ENCODE measurements at regions of chr11 and their contacts with region 1.

Region 1: DNA sequence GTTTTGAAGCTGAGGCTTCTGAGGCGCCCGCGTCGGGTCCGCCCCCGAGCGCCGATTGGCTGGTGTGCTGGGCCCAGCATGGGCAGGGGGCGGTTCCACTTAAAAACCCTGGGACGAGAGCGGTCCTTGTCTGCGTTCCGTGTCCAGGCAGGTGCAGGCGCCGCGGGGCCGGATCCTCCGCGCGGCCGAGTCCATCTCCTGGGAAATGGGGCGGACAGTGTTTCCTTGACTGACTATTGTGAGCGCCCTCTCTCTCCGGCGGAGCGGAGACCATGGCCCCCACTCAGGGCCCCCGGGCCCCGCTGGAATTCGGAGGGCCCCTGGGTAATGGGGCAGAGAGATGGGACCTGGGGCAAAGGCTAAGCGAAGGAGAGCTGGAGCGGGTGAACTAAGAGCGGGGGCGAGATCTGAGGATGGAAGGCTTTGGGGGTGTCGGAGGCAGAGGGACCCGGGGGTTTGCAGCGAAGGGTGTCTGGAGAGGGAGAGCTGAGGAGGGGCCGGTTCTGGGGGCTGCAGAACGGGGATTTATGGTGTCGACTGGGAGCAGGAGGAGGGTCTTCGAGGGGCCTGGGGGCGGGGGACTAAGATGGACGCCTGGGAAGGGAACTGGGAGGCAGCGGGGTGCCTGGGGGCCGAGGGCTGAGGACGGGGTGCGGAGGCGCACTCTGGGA is at the start of gene TM7SF2:
- DNase-seq: peak; percentile 95 to 97
- ATAC-seq: peak; percentile 63 to 86
- H3K4me3 ChIP-seq: peak within 1 kb of the TSS; percentile 52
- H3K27ac ChIP-seq: peak within 1 kb of the TSS; percentile 73 to 88
- H3K4me1 ChIP-seq: peaks cover 31% of the 10 kb centered on the region; the same call in 2 of the 3 replicates
- CTCF ChIP-seq: no peak
- EP300 ChIP-seq: no peak
- POLR2A ChIP-seq: peak; percentile 93
- RAD21 ChIP-seq: no peak
- polyA plus RNA-seq, gene TM7SF2: 8.2 and 9.6 TPM in 2 replicates

Region 2: DNA sequence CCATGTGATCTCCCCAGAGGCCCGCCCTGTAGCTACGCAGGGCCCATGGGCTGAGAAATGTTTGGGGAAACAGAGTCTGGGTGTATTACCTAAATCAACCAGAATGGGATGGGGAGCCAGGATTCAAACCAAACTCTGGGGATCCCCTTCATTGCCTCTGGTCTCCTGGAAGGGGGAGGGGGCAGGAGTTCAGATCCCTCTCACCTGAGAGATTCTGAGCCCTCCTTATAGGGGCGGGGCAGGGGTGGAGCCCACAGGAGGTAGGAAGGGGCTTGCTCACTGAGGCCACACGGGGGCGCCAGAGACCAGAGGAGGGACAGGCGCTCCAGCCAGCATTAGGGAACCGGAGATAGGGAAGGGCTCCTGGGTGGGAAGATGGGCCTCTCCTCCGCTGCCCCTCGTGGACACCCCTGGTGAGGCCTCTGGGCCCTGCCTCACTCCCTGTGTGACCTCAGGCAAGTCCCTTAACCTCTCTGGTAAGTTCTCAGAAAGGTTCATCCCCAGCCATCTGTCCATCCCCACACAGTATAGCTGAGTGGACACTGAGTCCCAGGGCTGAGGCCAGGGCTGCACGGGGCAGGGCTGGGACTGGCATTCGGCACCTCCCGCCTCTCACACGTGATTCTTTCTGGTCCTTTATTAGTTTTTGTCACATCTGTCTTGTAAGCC is 264.7 kb before region 1 on chr11:
- CTCF ChIA-PET with region 1: interaction called, 13 read pairs
- POLR2A ChIA-PET with region 1: interaction called, 4 read pairs
- DNase-seq: peak; percentile 93 to 95
- ATAC-seq: peak; percentile 69 to 86
- H3K4me3 ChIP-seq: no peak overlapping the region
- H3K27ac ChIP-seq: peak overlapping the region; percentile 57 to 92
- H3K4me1 ChIP-seq: peaks cover 74% of the 10 kb centered on the region
- CTCF ChIP-seq: peak; percentile 98
- EP300 ChIP-seq: no peak
- POLR2A ChIP-seq: no peak
- RAD21 ChIP-seq: peak; percentile 99

Region 3: DNA sequence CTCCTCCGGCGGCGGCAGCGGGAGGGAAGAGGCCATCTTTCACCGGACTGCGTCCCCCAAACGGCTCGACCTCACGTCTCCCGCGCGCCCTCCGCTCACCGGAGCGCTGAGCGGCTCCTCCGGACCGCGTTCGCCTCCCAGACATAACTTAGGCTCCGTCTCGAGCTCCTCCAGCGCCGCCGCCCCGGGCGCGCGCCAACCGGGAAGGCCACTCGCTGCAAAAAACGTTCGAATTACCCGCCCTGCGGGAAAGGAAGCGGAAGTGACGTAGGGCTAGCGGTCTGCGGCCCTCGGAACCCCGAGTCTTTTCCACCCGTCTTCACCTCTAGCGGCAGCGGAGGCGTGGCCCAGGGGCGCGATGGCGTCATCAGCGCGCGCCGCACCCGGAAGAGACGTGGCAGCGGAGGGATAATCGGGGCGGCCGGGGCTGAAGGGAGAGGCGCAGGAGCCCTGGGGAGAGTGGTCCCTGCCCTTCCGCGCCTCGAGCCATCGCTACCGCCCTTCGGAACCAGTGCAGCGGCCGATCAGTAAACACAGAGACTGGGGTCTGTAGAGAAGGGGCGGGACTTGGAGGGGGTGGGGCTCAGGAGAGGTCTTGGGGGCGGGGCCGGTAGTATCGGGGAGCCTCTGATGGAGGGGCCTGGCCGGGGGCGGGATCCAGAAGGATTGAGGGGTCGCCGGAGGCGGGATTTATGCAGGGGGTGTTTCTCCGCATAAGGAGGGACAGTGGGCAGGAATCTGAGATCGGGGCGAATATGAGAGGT is 27.9 kb before region 1 on chr11 and contains the starts of genes CDCA5 and ZFPL1:
- CTCF ChIA-PET with region 1: interaction called, 30 read pairs
- POLR2A ChIA-PET with region 1: no interaction called
- DNase-seq: peak; percentile 96
- ATAC-seq: peak; percentile 90 to 92
- H3K4me3 ChIP-seq: peak within 1 kb of the TSS; percentile 82
- H3K27ac ChIP-seq: peak within 1 kb of the TSS; percentile 85 to 90
- H3K4me1 ChIP-seq: peaks cover 26% of the 10 kb centered on the region
- CTCF ChIP-seq: no peak
- EP300 ChIP-seq: no peak
- POLR2A ChIP-seq: peak; percentile 56; the same call in 1 of the 2 replicates
- RAD21 ChIP-seq: no peak
- polyA plus RNA-seq, gene CDCA5: 28.0 and 30.9 TPM in 2 replicates
- polyA plus RNA-seq, gene ZFPL1: 27.7 and 30.1 TPM in 2 replicates

Region 4: GRCh38 chr11:65095974-65096806 is 15.7 kb before region 1 on chr11 and contains the start of gene VPS51:
- CTCF ChIA-PET with region 1: interaction called, 153 read pairs
- POLR2A ChIA-PET with region 1: interaction called, 13 read pairs
- DNase-seq: peak; percentile 94 to 95
- ATAC-seq: peak; percentile 96 to 99
- H3K4me3 ChIP-seq: peak within 1 kb of the TSS; percentile 95
- H3K27ac ChIP-seq: peak within 1 kb of the TSS; percentile 95 to 96
- H3K4me1 ChIP-seq: peaks cover 8% of the 10 kb centered on the region; the same call in 1 of the 3 replicates
- CTCF ChIP-seq: no peak
- EP300 ChIP-seq: no peak; a peak in 1 of 5 replicates
- POLR2A ChIP-seq: peak; percentile 67
- RAD21 ChIP-seq: no peak
- polyA plus RNA-seq, gene VPS51: 37.2 and 44.7 TPM in 2 replicates

Region 5: DNA sequence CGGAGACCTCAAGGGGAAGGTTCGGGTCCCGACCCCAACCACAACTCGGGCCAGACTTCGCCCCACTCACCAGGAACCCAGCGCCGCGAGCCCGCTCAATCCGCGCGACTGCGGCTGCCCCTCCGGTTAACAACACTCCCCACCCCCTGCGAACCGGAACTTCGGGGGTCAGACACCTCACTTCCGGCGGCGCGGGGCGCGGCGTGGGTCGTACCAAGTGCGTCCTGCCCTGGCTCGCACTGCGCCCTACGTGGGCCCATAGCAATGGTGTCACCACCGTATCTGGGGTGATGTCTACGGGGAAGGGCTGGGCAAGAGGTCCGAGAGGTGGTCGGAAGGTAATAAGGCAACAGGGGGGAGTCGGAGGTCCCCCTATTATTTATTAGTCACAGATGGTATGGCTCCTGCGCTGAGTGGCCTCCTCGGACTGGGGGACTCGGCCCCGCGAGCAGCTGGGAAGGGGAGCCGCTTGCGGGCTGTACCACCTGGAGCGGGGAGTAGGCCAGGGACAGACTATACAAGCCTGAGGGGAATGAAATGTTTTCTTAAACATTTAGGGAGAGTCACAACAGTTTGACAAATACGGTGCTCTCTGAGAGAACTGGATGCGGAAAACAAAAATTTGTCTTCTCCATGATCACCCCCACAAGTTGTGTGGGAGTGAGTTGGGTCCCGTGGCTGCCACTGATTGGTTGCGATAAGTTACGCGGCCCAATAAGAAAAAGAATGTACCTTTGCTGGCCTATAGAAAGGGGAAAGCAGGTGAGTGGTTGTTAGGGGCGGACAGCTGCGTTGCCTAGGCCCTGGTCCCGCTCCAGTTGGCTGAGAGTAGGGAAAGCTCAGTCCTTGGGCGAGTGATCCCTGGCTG is 22.7 kb after region 1 on chr11 and contains the start of gene SYVN1:
- CTCF ChIA-PET with region 1: interaction called, 75 read pairs
- POLR2A ChIA-PET with region 1: interaction called, 13 read pairs
- DNase-seq: peak; percentile 98 to 99
- ATAC-seq: peak; percentile 90 to 93
- H3K4me3 ChIP-seq: peak within 1 kb of the TSS; percentile 89
- H3K27ac ChIP-seq: peak within 1 kb of the TSS; percentile 96 to 98
- H3K4me1 ChIP-seq: peaks cover 15% of the 10 kb centered on the region
- CTCF ChIP-seq: no peak
- EP300 ChIP-seq: no peak
- POLR2A ChIP-seq: peak; percentile 94
- RAD21 ChIP-seq: peak in 1 of 2 experiments; percentile 1; a peak in 1 of 5 replicates
- polyA plus RNA-seq, gene SYVN1: 21.4 and 50.4 TPM in 2 replicates

Region 6: DNA sequence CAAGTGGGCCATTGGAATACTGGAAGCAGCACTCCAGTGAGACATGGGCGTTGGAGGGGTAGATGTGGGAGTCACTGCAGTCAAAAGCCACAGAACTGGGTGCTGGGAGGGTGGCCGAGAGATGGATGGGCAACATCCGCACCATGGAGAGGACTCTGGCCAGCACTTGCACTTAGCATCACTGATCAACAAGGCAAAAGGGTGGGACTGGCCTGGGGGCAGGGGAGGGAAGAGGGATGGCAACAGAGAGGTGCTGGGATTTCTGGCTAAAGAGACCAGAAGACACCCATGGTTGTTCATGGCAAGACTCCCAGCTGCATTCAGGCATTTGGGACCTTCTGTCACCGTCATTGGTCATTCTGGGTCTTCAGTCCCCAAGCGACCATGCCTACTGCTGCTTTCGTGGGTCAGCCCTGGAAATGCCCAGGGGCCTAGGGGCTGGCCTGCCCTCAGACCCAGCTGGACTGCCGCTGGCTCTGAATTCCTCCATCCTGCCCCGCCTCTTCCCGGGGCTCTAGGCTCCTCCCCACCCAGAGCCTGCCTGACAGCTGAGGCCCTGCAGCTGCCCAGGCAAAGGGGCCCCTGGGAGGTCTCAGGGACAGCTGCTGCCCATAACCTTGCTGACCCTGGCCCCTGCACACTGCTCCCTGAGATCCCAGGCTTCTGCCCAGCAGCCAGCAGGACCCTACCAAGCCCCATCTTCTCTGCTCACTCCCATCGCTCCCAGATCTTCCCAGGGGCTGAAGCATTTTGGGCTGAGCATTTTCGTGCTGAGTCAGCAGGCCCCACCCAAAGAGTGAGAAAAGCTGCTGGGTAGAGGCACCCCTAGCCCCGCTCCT is 189.8 kb after region 1 on chr11:
- CTCF ChIA-PET with region 1: no interaction called
- POLR2A ChIA-PET with region 1: no interaction called
- DNase-seq: no peak
- ATAC-seq: peak; percentile 52 to 56; a peak in 4 of 6 replicates
- H3K4me3 ChIP-seq: no peak overlapping the region
- H3K27ac ChIP-seq: peak overlapping the region in 1 of 2 experiments; percentile 66; a peak in 1 of 6 replicates
- H3K4me1 ChIP-seq: peaks cover 18% of the 10 kb centered on the region
- CTCF ChIP-seq: no peak
- EP300 ChIP-seq: no peak
- POLR2A ChIP-seq: no peak
- RAD21 ChIP-seq: no peak